ENCODE measurements at regions of chr1 and their contacts with region 1.

Region 1: GRCh38 chr1:151047925-151048645 is 534 bp downstream of the C1orf56 start:
- DNase-seq: peak; percentile 58
- ATAC-seq: peak; percentile 92
- H3K4me3 ChIP-seq: peak overlapping the region; percentile 75 to 79 (median 77)
- H3K27ac ChIP-seq: peak overlapping the region; percentile 59
- H3K4me1 ChIP-seq: peaks cover 41% of the 10 kb centered on the region
- H3K27me3 ChIP-seq: no peaks in the 10 kb centered on the region
- CTCF ChIP-seq: peak; percentile 81
- EP300 ChIP-seq: no peak
- POLR2A ChIP-seq: peak in 1 of 2 experiments; percentile 32; a peak in 1 of 4 replicates
- RAD21 ChIP-seq: peak; percentile 49

Region 2: GRCh38 chr1:150895601-150896000 is 152.5 kb before region 1 on chr1:
- CTCF ChIA-PET with region 1: no interaction called
- POLR2A ChIA-PET with region 1: no interaction called
- in situ Hi-C with region 1: no loop called
- intact Hi-C with region 1: no loop called
- DNase-seq: peak; percentile 13
- ATAC-seq: peak; percentile 54
- H3K4me3 ChIP-seq: no peak overlapping the region
- H3K27ac ChIP-seq: no peak overlapping the region
- H3K4me1 ChIP-seq: peaks cover 8% of the 10 kb centered on the region; the same call in 1 of the 2 replicates
- H3K27me3 ChIP-seq: no peaks in the 10 kb centered on the region
- CTCF ChIP-seq: no peak
- EP300 ChIP-seq: no peak
- POLR2A ChIP-seq: no peak
- RAD21 ChIP-seq: no peak

Region 3: DNA sequence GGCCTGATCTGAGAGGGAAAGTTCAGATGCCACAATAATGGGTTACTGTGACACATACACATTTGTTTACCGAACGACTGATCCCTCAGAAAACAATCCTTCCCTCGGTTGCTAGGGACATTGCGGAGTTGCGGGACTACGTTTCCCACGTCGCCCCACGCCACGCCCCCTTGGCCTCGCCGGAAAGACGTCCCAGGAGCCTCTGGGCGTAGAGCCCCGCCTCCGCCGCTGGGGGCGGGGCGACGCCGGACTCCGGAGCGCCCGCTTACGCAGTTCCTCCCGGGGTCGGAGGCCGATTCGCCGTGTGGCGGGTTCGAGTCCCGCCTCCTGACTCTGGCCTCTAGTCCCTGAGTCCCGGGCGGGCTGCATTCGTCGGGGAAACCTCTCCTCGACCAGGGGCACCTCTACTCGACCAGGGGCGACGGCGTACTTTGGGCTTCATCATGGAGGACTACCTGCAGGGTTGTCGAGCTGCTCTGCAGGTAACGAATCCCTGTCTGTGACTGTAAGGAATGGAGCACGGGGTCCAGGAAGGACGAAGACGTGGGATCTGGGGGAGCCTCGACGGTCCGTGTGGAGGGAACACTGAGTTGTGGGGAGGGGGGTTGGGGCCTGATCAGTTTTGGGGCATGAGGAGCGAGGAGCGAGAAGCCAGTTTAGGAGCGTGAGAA is 39.8 kb before region 1 on chr1 and contains the start of gene PRUNE1:
- CTCF ChIA-PET with region 1: no interaction called
- POLR2A ChIA-PET with region 1: interaction called, 23 read pairs
- in situ Hi-C with region 1: no loop called
- intact Hi-C with region 1: loop called (anchors 5 kb)
- DNase-seq: peak; percentile 95
- ATAC-seq: peak; percentile 55
- H3K4me3 ChIP-seq: peak within 1 kb of the TSS; percentile 66 to 99 (median 91)
- H3K27ac ChIP-seq: peak within 1 kb of the TSS; percentile 100
- H3K4me1 ChIP-seq: peaks cover 77% of the 10 kb centered on the region
- H3K27me3 ChIP-seq: no peaks in the 10 kb centered on the region; a peak in 1 of 5 replicates
- CTCF ChIP-seq: no peak
- EP300 ChIP-seq: peak in 1 of 2 experiments; percentile 39; a peak in 2 of 4 replicates
- POLR2A ChIP-seq: peak; percentile 32 to 77
- RAD21 ChIP-seq: 0 out of 2 replicates have a peak, but pooled peaks have one; percentile 4
- total RNA-seq, gene PRUNE1: 19.0 and 26.2 TPM in 2 replicates

Region 4: DNA sequence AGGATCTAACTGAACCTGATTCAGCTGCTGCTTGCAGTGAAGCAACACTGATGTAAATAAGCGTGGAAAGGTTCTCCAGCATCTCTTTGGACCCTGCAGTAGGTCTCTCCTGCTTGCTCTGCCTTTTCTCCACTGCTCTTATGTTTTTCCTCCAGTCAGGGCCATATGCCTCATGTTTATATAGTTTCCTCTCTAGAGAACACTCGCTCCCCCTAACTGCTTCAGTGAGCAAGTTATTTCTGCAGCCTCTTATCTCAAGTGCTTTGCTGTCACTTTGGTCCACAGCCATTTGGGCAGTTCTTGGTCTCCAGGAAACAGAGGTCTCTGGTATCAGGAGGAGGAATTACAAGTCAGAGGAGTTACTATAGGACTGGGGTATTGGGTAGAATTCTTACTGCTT is 34.6 kb before region 1 on chr1:
- CTCF ChIA-PET with region 1: no interaction called
- POLR2A ChIA-PET with region 1: interaction called, 21 read pairs
- in situ Hi-C with region 1: no loop called
- intact Hi-C with region 1: loop called (anchors 5 kb)
- DNase-seq: peak; percentile 68
- ATAC-seq: peak; percentile 58
- H3K4me3 ChIP-seq: peak overlapping the region; percentile 18 to 44 (median 39); a peak in 4 of 6 replicates
- H3K27ac ChIP-seq: peak overlapping the region; percentile 99
- H3K4me1 ChIP-seq: peaks cover 61% of the 10 kb centered on the region
- H3K27me3 ChIP-seq: no peaks in the 10 kb centered on the region; a peak in 1 of 5 replicates
- CTCF ChIP-seq: no peak
- EP300 ChIP-seq: no peak
- POLR2A ChIP-seq: no peak
- RAD21 ChIP-seq: no peak

Region 5: DNA sequence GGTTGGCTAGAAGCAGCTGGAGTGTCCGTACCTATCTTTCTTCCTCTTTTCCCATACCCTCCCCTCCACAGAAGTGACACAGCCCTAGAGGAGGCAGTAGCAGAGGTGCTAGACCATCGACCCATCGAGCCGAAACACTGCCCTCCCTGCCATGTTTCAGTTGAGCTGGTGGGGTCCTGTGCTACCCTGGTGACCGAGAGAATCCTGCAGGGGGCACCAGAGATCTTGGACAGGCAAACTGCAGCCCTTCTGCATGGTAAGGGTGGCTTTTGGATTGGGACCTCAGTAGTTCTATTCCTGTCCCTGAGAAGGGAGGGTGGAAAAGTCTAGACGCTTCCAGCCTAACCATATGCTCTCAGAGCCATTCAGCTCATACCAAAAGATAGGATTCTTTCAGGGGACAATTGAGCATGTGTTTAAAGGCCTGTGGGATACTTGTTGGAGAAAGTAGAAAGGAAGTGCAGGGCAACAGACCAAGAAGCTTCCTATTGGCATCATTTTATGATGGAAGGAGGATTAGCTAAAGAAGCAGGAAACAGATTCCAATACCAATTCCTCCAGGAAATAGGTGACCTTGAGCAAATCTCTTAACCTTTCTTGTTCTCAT is 23.4 kb before region 1 on chr1:
- CTCF ChIA-PET with region 1: interaction called, 5 read pairs
- POLR2A ChIA-PET with region 1: interaction called, 4 read pairs
- in situ Hi-C with region 1: no loop called
- intact Hi-C with region 1: loop called (anchors 1 kb)
- DNase-seq: peak; percentile 58
- ATAC-seq: peak; percentile 97
- H3K4me3 ChIP-seq: no peak overlapping the region
- H3K27ac ChIP-seq: no peak overlapping the region
- H3K4me1 ChIP-seq: no peaks in the 10 kb centered on the region
- H3K27me3 ChIP-seq: no peaks in the 10 kb centered on the region
- CTCF ChIP-seq: peak; percentile 91
- EP300 ChIP-seq: no peak
- POLR2A ChIP-seq: no peak
- RAD21 ChIP-seq: peak; percentile 78

Region 6: GRCh38 chr1:151059078-151059907 is 11.2 kb after region 1 on chr1 and contains the start of gene CDC42SE1:
- CTCF ChIA-PET with region 1: no interaction called
- POLR2A ChIA-PET with region 1: interaction called, 23 read pairs
- in situ Hi-C with region 1: no loop called
- intact Hi-C with region 1: no loop called
- DNase-seq: peak; percentile 67
- ATAC-seq: peak; percentile 96
- H3K4me3 ChIP-seq: peak within 1 kb of the TSS; percentile 83 to 96 (median 88)
- H3K27ac ChIP-seq: peak within 1 kb of the TSS; percentile 56
- H3K4me1 ChIP-seq: peaks cover 50% of the 10 kb centered on the region
- H3K27me3 ChIP-seq: 0 out of 5 replicates have a peak, but pooled peaks cover 0 to 3% of the 10 kb centered on the region in 2 experiments
- CTCF ChIP-seq: peak; percentile 89
- EP300 ChIP-seq: no peak
- POLR2A ChIP-seq: peak; percentile 38 to 77; a peak in 3 of 4 replicates
- RAD21 ChIP-seq: peak; percentile 66; the same call in 1 of the 2 replicates
- total RNA-seq, gene CDC42SE1: 17.6 and 18.8 TPM in 2 replicates

Measured in HepG2 (cell line).